Heart right ventricle (tissue), 16 donors: ENCODE measurements at regions of chr11 and their contacts with region 1.

Region 1: DNA sequence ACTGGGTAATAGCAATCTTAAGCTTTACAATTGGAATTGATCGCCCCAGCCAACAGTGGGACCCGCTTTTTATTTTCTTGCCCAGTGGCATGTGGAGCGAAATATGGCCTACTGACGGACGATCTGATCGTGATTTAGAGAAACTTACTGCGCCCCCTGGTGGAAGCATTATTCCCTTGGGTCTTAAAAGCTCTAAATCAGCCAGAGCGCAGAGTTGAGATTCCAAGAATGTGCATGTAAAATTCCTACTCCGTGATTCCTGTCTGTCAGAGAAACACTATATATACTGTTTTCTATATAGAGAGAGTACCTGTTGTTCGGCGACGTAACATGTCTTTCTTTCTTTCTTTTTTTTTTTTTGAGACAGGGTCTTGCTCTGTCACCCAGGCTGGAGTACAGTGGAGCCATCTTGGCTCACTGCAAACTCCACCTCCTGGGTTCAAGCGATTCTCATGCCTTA is 3.7 kb upstream of the DPF2 start:
- DNase-seq: peak; percentile 37 to 91
- ATAC-seq: peak in 7 of 8 donors; percentile 15 to 45 (median 34)
- H3K4me3 ChIP-seq: peak overlapping the region in 1 of 10 donors; percentile 6
- H3K27ac ChIP-seq: peak overlapping the region in 5 of 10 donors; percentile 8 to 51 (median 20)
- H3K4me1 ChIP-seq: peaks cover 3 to 25% (median 17%) of the 10 kb centered on the region in 9 donors
- H3K27me3 ChIP-seq: no peaks in the 10 kb centered on the region
- CTCF ChIP-seq: peak; percentile 78 to 85 (median 84)

Region 2: DNA sequence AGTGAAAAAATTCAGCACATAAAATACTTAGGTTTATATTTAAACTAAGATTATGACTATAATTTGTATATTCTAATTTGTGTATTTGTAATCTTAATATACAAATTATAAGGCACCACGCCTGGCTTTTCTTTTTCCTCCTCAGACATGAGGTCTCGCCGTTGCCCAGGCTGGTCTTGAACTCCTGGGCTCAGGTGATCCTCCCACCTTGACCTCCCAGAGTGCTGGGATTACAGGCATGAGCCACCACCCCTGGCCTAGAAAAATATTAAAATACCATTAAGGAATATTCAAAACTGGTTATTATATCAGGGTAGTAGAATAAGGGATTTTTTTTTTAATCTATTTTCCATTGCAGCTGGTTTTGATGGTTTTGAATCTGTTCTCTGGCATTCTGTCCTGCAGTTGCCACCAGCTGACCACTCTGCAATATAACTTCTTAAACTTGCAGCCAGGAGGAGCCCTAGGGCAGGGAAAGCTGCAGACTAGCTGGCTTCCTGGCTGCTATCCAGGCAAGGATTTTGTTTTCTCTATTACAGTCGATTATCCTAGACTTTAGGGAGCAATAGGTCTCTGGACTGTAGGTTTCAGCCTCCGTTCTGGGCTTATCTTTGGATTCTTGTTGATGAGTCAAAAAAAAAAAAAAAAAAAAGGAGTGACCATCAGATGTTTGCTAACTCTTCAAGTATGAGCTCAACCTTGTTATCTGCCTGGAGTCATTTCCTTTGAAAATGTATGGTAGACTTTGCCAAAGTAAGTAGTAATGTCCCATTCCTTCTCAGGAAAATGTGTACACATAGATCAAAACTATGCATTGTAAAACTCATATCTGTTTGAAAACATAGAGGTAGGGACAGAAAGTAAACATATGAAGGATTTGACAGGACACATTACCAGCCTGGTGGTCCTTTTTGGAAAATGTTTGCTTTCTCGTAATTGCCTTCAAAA is 55.0 kb before region 1 on chr11:
- intact Hi-C with region 1: loop called in 7 of 10 experiments (anchors 1 to 5 kb)
- DNase-seq: peak; percentile 47 to 92
- ATAC-seq: peak; percentile 85 to 93 (median 90)
- H3K4me3 ChIP-seq: peak overlapping the region in 1 of 10 donors; percentile 33
- H3K27ac ChIP-seq: peak overlapping the region in 9 of 10 donors; percentile 11 to 74 (median 52)
- H3K4me1 ChIP-seq: peaks cover 0 to 34% (median 15%) of the 10 kb centered on the region in 9 donors
- H3K27me3 ChIP-seq: no peaks in the 10 kb centered on the region
- CTCF ChIP-seq: peak; percentile 63 to 93 (median 82)

Region 3: DNA sequence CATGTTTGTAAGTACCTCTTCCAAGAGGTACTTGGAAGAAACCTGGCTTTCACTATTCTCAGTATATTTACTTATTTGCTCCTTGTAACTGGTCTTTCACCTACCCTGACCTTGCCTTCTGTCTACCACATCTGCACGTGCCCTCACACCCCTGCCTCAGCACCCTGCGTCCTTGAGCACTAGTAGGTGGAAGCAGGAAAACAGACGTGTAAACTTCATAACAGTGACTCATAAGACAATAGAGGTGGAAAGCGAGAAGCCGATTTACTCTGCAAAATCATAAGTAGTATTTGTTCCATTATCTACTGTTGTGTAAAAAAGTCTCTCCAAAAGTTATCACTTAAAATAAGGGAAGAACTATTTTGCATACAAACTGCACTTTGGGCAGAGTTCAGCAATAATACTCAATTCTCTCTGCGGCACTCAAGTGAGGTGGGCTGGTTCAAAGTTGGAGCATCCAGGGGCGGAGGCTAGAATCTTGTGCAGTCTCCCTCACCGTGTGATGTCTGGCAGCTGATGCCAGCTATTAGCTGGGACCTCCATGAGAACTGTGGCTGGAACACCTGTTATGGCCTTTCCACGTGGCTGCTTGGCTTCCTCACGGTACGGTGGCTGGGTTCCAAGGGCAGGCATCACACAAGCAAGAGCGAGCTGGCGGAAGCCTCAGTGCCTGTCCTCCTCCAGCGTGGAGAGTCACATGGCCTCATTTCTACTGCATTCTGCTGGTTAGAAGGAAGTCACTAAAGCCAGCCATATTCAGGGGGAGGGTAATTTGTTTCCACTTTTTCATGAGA is 770.5 kb after region 1 on chr11:
- intact Hi-C with region 1: no loop called
- DNase-seq: peak; percentile 66 to 67
- ATAC-seq: peak; percentile 77 to 97 (median 84)
- H3K4me3 ChIP-seq: peak overlapping the region in 1 of 10 donors; percentile 27
- H3K27ac ChIP-seq: peak overlapping the region in 3 of 10 donors; percentile 20 to 66 (median 26)
- H3K4me1 ChIP-seq: peaks cover 0 to 36% (median 17%) of the 10 kb centered on the region in 9 donors
- H3K27me3 ChIP-seq: no peaks in the 10 kb centered on the region
- CTCF ChIP-seq: no peak